ENCODE measurements at regions of chr6 and their contacts with region 1.

Region 1: GRCh38 chr6:83514866-83515466 is 2.6 kb downstream of the PRSS35 start:
- DNase-seq: peak in 3 of 5 donors; percentile 26 to 79 (median 62)
- H3K4me3 ChIP-seq: no peak overlapping the region
- H3K27ac ChIP-seq: no peak overlapping the region
- H3K4me1 ChIP-seq: no peaks in the 10 kb centered on the region
- H3K27me3 ChIP-seq: no peaks in the 10 kb centered on the region
- CTCF ChIP-seq: peak; percentile 81

Region 2: GRCh38 chr6:83221889-83222479 is 293.0 kb before region 1 on chr6:
- intact Hi-C with region 1: loop called (anchors 5 kb)
- DNase-seq: peak in 2 of 5 donors; percentile 58 to 61
- H3K4me3 ChIP-seq: no peak overlapping the region
- H3K27ac ChIP-seq: no peak overlapping the region
- H3K4me1 ChIP-seq: no peaks in the 10 kb centered on the region
- H3K27me3 ChIP-seq: no peaks in the 10 kb centered on the region
- CTCF ChIP-seq: no peak

Measured in kidney (tissue), 22 donors.